SK-N-SH (cell line): ENCODE measurements at regions of chr16 and their contacts with region 1.

Region 1: DNA sequence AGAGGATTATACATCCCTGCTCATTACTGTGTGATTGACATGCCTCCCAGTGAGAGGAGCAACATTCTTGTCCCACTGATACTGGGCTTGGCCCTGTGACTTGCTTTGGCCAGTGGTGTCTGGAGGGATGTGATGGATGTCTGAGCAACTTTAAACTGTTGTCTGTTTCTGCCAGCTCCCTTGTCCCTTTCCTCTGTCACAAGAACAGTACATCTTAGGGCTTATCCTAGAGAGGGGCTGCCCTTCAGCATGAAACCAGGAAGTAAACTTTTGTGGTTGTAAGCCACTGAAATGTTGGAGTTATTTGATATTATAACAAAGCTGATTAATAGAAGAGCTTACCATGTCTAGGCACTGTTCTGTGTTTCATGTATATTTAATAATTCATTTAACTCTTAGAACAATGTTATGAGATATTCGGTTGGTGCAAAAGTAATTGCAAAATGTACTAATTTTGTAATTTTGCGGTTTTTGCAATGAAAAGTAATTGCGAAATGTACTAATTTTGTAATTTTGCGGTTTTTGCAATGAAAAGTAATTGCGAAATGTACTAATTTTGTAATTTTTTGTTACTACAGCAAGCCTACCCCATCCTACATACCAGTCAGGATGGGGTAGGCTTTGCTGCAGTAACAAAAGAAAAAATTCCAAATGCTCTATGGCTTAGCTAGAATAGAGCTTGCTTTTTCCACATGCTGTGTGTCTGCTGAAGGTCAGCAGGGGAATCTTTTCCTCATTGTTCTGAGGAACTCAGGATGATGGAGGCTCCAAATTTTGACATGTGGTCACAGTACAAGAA is 83.1 kb upstream of the GPRC5B start:
- DNase-seq: no peak
- H3K4me3 ChIP-seq: no peak overlapping the region
- H3K27ac ChIP-seq: no peak overlapping the region
- H3K4me1 ChIP-seq: no peaks in the 10 kb centered on the region; a peak in 1 of 4 replicates
- H3K27me3 ChIP-seq: no peaks in the 10 kb centered on the region
- CTCF ChIP-seq: no peak
- EP300 ChIP-seq: no peak
- RAD21 ChIP-seq: no peak

Region 2: GRCh38 chr16:19980632-19981265 is 13.0 kb after region 1 on chr16:
- CTCF ChIA-PET with region 1: interaction called, 26 read pairs
- POLR2A ChIA-PET with region 1: no interaction called
- DNase-seq: peak; percentile 41
- H3K4me3 ChIP-seq: no peak overlapping the region
- H3K27ac ChIP-seq: no peak overlapping the region
- H3K4me1 ChIP-seq: no peaks in the 10 kb centered on the region
- H3K27me3 ChIP-seq: no peaks in the 10 kb centered on the region
- CTCF ChIP-seq: peak; percentile 58
- EP300 ChIP-seq: no peak
- RAD21 ChIP-seq: peak; percentile 26; the same call in 1 of the 2 replicates